ENCODE measurements at regions of chrX and their contacts with region 1.

Region 1: GRCh38 chrX:11143931-11144678 is 33.0 kb downstream of the HCCS start:
- DNase-seq: peak; percentile 82
- H3K4me3 ChIP-seq: no peak overlapping the region
- H3K27ac ChIP-seq: no peak overlapping the region
- H3K4me1 ChIP-seq: no peaks in the 10 kb centered on the region
- H3K27me3 ChIP-seq: no peaks in the 10 kb centered on the region
- CTCF ChIP-seq: peak; percentile 71

Region 2: DNA sequence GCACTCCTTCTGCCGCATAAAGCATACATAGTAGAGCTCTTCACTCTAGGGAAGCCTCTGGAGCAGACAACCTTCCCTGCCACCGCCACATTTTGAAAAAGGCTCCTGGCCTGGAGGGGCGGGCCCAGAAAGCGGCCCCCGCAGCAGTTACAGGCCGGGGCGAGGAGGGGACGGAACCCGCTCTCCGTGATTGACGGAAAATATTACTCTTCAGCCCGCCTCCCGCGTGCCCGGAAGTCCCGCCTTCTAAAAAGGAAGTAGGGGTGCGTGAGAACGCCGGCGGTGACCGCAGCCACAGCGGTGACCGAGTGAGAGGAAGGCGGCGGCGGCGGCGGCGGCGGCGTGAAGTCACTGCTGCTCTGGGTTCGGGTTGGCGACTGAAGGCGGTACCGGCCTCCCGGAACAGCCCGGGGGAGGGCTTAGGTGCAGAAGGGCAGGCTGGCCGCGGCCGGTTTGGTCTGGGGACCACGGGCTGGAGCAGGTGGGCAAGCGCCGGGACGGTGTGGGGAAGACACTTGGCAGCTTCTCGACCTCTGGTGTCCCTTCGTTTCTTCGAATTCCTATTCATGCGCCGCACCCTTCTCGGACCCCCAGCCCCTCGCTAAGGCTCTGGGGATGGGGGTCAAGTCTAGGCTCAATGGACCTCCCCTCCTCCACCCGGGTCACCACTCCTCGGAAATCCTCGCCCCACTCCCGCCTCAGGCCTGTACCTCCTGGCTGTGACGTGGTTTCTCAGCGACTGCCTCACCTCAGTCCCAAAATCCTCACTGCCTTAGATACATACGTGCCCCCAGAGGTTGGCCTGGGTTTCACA is 32.9 kb before region 1 on chrX and contains the start of gene HCCS:
- intact Hi-C with region 1: no loop called
- DNase-seq: peak; percentile 85
- H3K4me3 ChIP-seq: peak within 1 kb of the TSS; percentile 35
- H3K27ac ChIP-seq: peak within 1 kb of the TSS; percentile 71
- H3K4me1 ChIP-seq: no peaks in the 10 kb centered on the region
- H3K27me3 ChIP-seq: no peaks in the 10 kb centered on the region
- CTCF ChIP-seq: no peak
- total RNA-seq, gene HCCS: 35.7 to 43.7 TPM

Region 3: GRCh38 chrX:11363069-11363594 is 219.0 kb after region 1 on chrX:
- intact Hi-C with region 1: no loop called
- DNase-seq: no peak
- H3K4me3 ChIP-seq: no peak overlapping the region
- H3K27ac ChIP-seq: no peak overlapping the region
- H3K4me1 ChIP-seq: no peaks in the 10 kb centered on the region
- H3K27me3 ChIP-seq: no peaks in the 10 kb centered on the region
- CTCF ChIP-seq: no peak

Region 4: GRCh38 chrX:11533211-11533651 is 389.1 kb after region 1 on chrX:
- intact Hi-C with region 1: loop called (anchors 2 kb)
- DNase-seq: no peak
- H3K4me3 ChIP-seq: no peak overlapping the region
- H3K27ac ChIP-seq: no peak overlapping the region
- H3K4me1 ChIP-seq: no peaks in the 10 kb centered on the region
- H3K27me3 ChIP-seq: no peaks in the 10 kb centered on the region
- CTCF ChIP-seq: peak; percentile 90

Measured in colonic mucosa (tissue), 4 donors.